ENCODE measurements at regions of chr22 and their contacts with region 1.

Region 1: GRCh38 chr22:17171313-17172171 is 12.5 kb upstream of the HDHD5 start:
- DNase-seq: peak; percentile 83 to 98 (median 90)
- ATAC-seq: peak; percentile 98
- H3K4me3 ChIP-seq: peak overlapping the region; percentile 56 to 60
- H3K27ac ChIP-seq: peak overlapping the region; percentile 95 to 98
- H3K4me1 ChIP-seq: peaks cover 0 to 15% of the 10 kb centered on the region in 2 donors
- H3K27me3 ChIP-seq: no peaks in the 10 kb centered on the region
- CTCF ChIP-seq: peak; percentile 90 to 92

Region 2: GRCh38 chr22:17314487-17314886 is 142.9 kb after region 1 on chr22:
- intact Hi-C with region 1: no loop called
- DNase-seq: no peak
- ATAC-seq: no peak
- H3K4me3 ChIP-seq: no peak overlapping the region
- H3K27ac ChIP-seq: no peak overlapping the region
- H3K4me1 ChIP-seq: no peaks in the 10 kb centered on the region
- H3K27me3 ChIP-seq: no peaks in the 10 kb centered on the region
- CTCF ChIP-seq: no peak

Region 3: DNA sequence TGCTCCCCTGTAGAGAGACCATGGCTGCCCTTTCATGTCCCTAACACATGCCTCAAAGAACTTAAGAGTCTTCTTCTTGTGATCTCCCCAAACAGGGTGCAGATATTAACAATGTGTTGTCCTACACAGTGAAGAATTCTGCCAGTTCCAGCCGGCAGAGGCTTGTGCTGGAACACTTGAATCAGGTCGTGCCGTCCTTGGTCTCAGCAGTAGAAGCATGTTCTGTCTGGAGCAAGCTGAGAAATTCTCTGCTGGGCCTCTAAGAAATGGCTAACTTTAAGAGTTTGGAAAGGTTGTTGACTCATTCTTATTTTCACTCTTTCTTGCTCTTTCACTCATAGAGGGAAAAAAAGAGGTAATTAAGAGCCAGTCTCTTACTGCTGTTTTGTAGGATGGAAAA is 320.7 kb after region 1 on chr22:
- intact Hi-C with region 1: loop called in 1 of 2 experiments (anchors 10 kb)
- DNase-seq: peak in 1 of 4 donors; percentile 20
- ATAC-seq: peak; percentile 31
- H3K4me3 ChIP-seq: no peak overlapping the region
- H3K27ac ChIP-seq: peak overlapping the region in 1 of 2 donors; percentile 22
- H3K4me1 ChIP-seq: peaks cover 0 to 8% of the 10 kb centered on the region in 2 donors
- H3K27me3 ChIP-seq: no peaks in the 10 kb centered on the region
- CTCF ChIP-seq: no peak